Heart right ventricle (tissue), 16 donors: ENCODE measurements at regions of chr14 and their contacts with region 1.

Region 1: GRCh38 chr14:34331728-34332623 is 130.1 kb downstream of the SPTSSA start:
- DNase-seq: peak; percentile 43 to 48
- ATAC-seq: peak; percentile 67 to 85 (median 76)
- H3K4me3 ChIP-seq: no peak overlapping the region
- H3K27ac ChIP-seq: no peak overlapping the region
- H3K4me1 ChIP-seq: peaks cover 0 to 19% (median 0%) of the 10 kb centered on the region in 9 donors
- H3K27me3 ChIP-seq: no peaks in the 10 kb centered on the region
- CTCF ChIP-seq: peak; percentile 67 to 83 (median 77)

Region 2: GRCh38 chr14:34496679-34497513 is 164.9 kb after region 1 on chr14:
- intact Hi-C with region 1: loop called in 7 of 10 experiments (anchors 2 to 10 kb)
- DNase-seq: peak; percentile 69 to 82
- ATAC-seq: peak; percentile 88 to 96 (median 92)
- H3K4me3 ChIP-seq: peak overlapping the region in 2 of 10 donors; percentile 17 to 22
- H3K27ac ChIP-seq: peak overlapping the region; percentile 18 to 83 (median 68)
- H3K4me1 ChIP-seq: peaks cover 0 to 17% (median 0%) of the 10 kb centered on the region in 9 donors
- H3K27me3 ChIP-seq: no peaks in the 10 kb centered on the region
- CTCF ChIP-seq: peak in 4 of 9 donors; percentile 12 to 36 (median 27)

Region 3: DNA sequence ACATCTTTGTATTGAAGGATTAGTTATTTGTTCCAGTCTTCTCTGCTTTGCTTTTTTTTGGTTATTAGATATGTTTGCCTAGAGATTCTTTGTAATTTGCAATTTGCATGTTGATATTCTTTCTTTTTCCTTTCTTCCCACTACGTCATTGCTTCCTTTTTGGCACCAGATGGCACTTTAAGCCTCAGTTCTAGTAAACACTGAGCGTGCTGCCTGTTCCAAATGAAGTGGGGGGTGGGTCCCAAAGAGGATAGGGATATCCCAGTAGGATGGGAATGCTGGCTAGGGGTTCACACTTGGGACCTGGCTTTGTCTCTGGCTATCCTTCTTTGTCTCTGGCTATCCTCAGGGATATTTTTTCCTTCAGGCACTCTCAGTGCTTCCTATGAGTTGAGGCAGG is 190.5 kb after region 1 on chr14:
- intact Hi-C with region 1: loop called in 1 of 10 experiments (anchors 10 kb)
- DNase-seq: no peak
- ATAC-seq: no peak
- H3K4me3 ChIP-seq: no peak overlapping the region
- H3K27ac ChIP-seq: no peak overlapping the region
- H3K4me1 ChIP-seq: no peaks in the 10 kb centered on the region
- H3K27me3 ChIP-seq: no peaks in the 10 kb centered on the region
- CTCF ChIP-seq: no peak